ENCODE measurements at regions of chr2 and their contacts with region 1.

Region 1: GRCh38 chr2:47323009-47323821 is 79.7 kb upstream of the MSH2 start:
- DNase-seq: peak; percentile 87
- H3K4me3 ChIP-seq: no peak overlapping the region; a peak in 1 of 4 replicates
- H3K27ac ChIP-seq: no peak overlapping the region
- H3K4me1 ChIP-seq: peaks cover 2 to 17% of the 10 kb centered on the region in 2 experiments; a peak in 1 of 4 replicates
- H3K27me3 ChIP-seq: no peaks in the 10 kb centered on the region
- CTCF ChIP-seq: peak; percentile 99
- EP300 ChIP-seq: no peak
- RAD21 ChIP-seq: peak; percentile 100

Region 2: GRCh38 chr2:46887028-46887885 is 436.0 kb before region 1 on chr2:
- CTCF ChIA-PET with region 1: interaction called, 24 read pairs
- POLR2A ChIA-PET with region 1: no interaction called
- DNase-seq: no peak
- H3K4me3 ChIP-seq: no peak overlapping the region
- H3K27ac ChIP-seq: peak overlapping the region in 1 of 2 experiments; percentile 85; a peak in 2 of 4 replicates
- H3K4me1 ChIP-seq: peaks cover 0 to 35% of the 10 kb centered on the region in 2 experiments; a peak in 2 of 4 replicates
- H3K27me3 ChIP-seq: no peaks in the 10 kb centered on the region
- CTCF ChIP-seq: no peak
- EP300 ChIP-seq: no peak; a peak in 1 of 4 replicates
- RAD21 ChIP-seq: no peak

Region 3: DNA sequence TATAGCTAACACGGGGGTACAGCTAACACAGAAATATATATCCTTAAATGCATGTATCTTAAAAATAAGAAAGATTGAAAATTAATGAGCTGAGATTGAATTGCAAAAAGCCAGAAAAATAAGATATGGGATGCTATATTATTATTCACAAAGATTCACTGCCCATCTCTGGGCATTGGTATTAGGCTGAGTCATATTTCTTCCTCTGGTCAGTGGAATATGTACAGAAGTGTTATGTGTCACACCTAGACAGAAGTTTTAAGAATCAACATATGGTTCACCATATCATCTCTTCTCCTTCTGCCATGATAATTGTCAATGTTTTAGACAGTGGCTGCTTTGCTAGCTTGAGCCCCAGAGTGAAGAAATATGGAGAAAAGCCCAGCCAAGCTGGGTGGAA is 393.6 kb before region 1 on chr2:
- CTCF ChIA-PET with region 1: interaction called, 107 read pairs
- POLR2A ChIA-PET with region 1: no interaction called
- DNase-seq: no peak
- H3K4me3 ChIP-seq: no peak overlapping the region
- H3K27ac ChIP-seq: no peak overlapping the region
- H3K4me1 ChIP-seq: no peaks in the 10 kb centered on the region
- H3K27me3 ChIP-seq: no peaks in the 10 kb centered on the region
- CTCF ChIP-seq: no peak
- EP300 ChIP-seq: no peak
- RAD21 ChIP-seq: no peak

Region 4: GRCh38 chr2:47008381-47009252 is 314.6 kb before region 1 on chr2:
- CTCF ChIA-PET with region 1: interaction called, 13 read pairs
- POLR2A ChIA-PET with region 1: no interaction called
- DNase-seq: peak; percentile 87
- H3K4me3 ChIP-seq: no peak overlapping the region
- H3K27ac ChIP-seq: peak overlapping the region; percentile 24 to 93; a peak in 3 of 4 replicates
- H3K4me1 ChIP-seq: peaks cover 13 to 62% of the 10 kb centered on the region in 2 experiments
- H3K27me3 ChIP-seq: no peaks in the 10 kb centered on the region
- CTCF ChIP-seq: no peak
- EP300 ChIP-seq: peak in 1 of 2 experiments; percentile 7; a peak in 1 of 4 replicates
- RAD21 ChIP-seq: 0 out of 2 replicates have a peak, but pooled peaks have one; percentile 1

Region 5: GRCh38 chr2:47058003-47058931 is 264.9 kb before region 1 on chr2:
- CTCF ChIA-PET with region 1: interaction called, 31 read pairs
- POLR2A ChIA-PET with region 1: no interaction called
- DNase-seq: no peak
- H3K4me3 ChIP-seq: no peak overlapping the region
- H3K27ac ChIP-seq: peak overlapping the region; percentile 99 to 100
- H3K4me1 ChIP-seq: peaks cover 38 to 81% of the 10 kb centered on the region in 2 experiments
- H3K27me3 ChIP-seq: no peaks in the 10 kb centered on the region
- CTCF ChIP-seq: no peak
- EP300 ChIP-seq: no peak
- RAD21 ChIP-seq: no peak

Region 6: DNA sequence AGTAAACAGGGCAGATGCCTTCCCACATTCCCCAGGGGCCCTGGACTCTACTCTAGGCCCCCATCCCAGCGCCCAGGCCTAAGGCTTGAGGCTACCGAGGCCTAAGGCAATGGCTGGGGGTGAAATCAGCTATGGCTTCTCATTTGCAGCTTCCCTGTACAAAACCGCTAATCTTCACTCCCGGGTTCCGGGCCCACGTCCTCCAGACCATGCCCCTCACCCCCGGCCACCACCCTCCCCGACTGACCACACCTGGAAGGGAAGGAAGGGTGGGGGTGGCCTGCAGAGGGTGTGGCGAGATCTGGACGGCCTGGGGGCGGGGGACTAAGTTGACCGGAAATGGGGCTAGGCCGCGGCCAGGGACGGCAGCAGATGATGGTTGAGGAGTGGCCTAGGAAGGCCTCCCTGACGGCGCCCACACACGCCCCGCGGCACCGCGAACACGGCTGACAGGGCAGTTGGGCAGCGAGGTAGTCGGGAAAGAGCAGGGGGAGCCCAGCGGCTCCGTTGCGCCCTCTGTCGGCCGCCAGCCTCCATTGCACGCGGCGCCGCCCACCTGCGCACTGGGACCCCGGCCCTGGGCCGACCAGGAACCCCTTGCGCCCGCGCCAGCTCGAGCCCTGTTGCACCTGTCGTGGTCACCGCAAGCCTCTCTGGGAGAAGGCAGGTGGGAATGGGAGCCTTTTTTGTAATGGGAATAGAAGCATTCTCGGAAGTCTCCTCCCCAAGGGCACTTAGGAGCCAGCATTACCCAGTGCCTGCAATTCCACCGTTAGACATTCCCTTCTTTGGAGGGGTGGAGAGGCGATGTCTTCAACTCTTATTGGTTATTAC is 51.0 kb before region 1 on chr2:
- CTCF ChIA-PET with region 1: interaction called, 41 read pairs
- POLR2A ChIA-PET with region 1: interaction called, 3 read pairs
- DNase-seq: peak; percentile 98
- H3K4me3 ChIP-seq: peak overlapping the region in 1 of 2 experiments; percentile 35; a peak in 3 of 4 replicates
- H3K27ac ChIP-seq: peak overlapping the region; percentile 44 to 84; a peak in 3 of 4 replicates
- H3K4me1 ChIP-seq: peaks cover 16 to 30% of the 10 kb centered on the region in 2 experiments; a peak in 3 of 4 replicates
- H3K27me3 ChIP-seq: no peaks in the 10 kb centered on the region
- CTCF ChIP-seq: peak; percentile 99
- EP300 ChIP-seq: no peak; a peak in 1 of 4 replicates
- RAD21 ChIP-seq: peak; percentile 89

Region 7: GRCh38 chr2:47344890-47345589 is 21.8 kb after region 1 on chr2:
- CTCF ChIA-PET with region 1: interaction called, 17 read pairs
- POLR2A ChIA-PET with region 1: interaction called, 3 read pairs
- DNase-seq: peak; percentile 95
- H3K4me3 ChIP-seq: peak overlapping the region; percentile 58 to 69
- H3K27ac ChIP-seq: peak overlapping the region; percentile 93 to 99
- H3K4me1 ChIP-seq: peaks cover 5 to 21% of the 10 kb centered on the region in 2 experiments; a peak in 3 of 4 replicates
- H3K27me3 ChIP-seq: no peaks in the 10 kb centered on the region
- CTCF ChIP-seq: peak; percentile 36; the same call in 1 of the 2 replicates
- EP300 ChIP-seq: peak in 1 of 2 experiments; percentile 73; a peak in 2 of 4 replicates
- RAD21 ChIP-seq: no peak